ENCODE measurements at regions of chr2 and their contacts with region 1.

Region 1: GRCh38 chr2:179842498-179843153 is 18.8 kb downstream of the ZNF385B start:
- DNase-seq: peak; percentile 77
- H3K4me3 ChIP-seq: peak overlapping the region; percentile 1
- H3K27ac ChIP-seq: peak overlapping the region; percentile 28
- H3K4me1 ChIP-seq: peaks cover 48% of the 10 kb centered on the region
- CTCF ChIP-seq: peak; percentile 94

Region 2: DNA sequence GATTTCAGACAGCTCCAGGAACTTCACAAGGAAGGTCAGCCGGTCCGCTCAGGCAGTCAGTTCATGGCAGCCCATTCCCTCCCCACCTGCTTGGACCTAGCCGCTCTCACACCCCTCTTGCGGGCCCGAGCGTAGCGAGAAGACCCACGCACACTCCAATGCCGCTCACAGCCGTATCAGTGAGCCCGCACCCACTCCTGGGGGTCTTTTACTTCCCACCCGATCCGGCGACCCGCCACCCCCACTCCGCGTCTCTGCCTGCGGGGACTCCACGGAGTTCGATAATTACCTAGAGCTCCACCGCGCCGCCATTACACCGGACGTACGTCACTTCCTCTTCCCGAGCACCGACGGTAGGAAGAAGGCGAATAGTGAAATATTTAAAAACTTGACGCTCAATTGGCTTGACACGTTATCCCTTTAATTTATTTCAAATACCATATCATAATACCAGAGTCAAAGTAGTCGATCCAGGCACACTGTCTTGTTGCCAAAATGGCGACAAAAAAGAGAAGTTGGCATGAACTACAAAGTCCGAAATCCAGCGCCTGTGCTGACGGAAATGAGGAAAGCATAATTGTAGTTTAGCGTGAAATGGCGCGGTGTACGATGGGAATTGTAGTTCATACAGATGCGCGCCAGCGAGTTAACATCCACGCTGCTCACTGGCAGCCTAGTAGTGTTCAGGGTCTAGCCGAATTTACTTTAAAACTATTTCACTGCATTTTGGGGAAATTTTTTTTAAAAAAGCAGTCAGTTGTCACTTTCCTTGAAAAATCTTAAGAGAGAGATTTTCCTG is 164.4 kb after region 1 on chr2 and contains the start of gene CWC22:
- CTCF ChIA-PET with region 1: no interaction called
- POLR2A ChIA-PET with region 1: no interaction called
- intact Hi-C with region 1: loop called (anchors 10 kb)
- DNase-seq: peak; percentile 96
- H3K4me3 ChIP-seq: peak within 1 kb of the TSS; percentile 88
- H3K27ac ChIP-seq: peak within 1 kb of the TSS; percentile 61
- H3K4me1 ChIP-seq: peaks cover 28% of the 10 kb centered on the region
- CTCF ChIP-seq: no peak
- total RNA-seq, gene CWC22: 11.6 and 16.2 TPM in 2 replicates

Region 3: DNA sequence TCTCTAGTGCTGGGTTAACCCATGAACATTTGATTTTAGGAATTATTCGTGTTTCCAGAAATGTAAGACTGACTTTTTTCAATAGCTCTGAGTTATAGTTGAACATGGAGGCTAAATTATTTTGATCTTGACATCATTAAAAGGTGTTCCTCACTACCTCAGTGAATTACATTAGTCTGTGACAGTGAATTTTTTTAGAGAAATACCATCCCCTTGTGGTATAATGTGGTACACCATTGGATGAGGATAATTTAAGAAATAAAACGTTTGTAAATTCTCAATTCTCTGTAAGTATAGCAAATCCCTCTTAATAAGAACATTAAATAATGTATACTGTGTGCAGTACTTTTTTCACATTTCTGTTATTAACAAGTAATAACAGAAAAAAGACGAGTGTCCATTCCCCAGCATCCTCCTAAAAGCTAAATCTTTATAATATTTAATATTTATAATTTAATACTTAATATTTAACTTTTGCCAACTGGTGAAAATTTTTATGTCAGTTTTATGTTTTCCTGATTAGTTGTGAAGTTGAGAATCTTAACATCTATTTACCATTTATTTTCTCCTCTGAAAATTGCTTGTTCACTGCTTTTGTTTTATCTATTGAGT is 234.8 kb after region 1 on chr2:
- CTCF ChIA-PET with region 1: no interaction called
- POLR2A ChIA-PET with region 1: no interaction called
- intact Hi-C with region 1: loop called (anchors 2 kb)
- DNase-seq: peak; percentile 17
- H3K4me3 ChIP-seq: no peak overlapping the region
- H3K27ac ChIP-seq: no peak overlapping the region
- H3K4me1 ChIP-seq: no peaks in the 10 kb centered on the region
- CTCF ChIP-seq: peak; percentile 87